Gastrocnemius medialis (tissue), 4 donors: ENCODE measurements at regions of chr18 and their contacts with region 1.

Region 1: GRCh38 chr18:2932247-2933181 is 80.4 kb downstream of the LPIN2 start:
- DNase-seq: no peak
- ATAC-seq: peak; percentile 26 to 64
- H3K4me3 ChIP-seq: no peak overlapping the region
- H3K27ac ChIP-seq: no peak overlapping the region
- H3K4me1 ChIP-seq: no peaks in the 10 kb centered on the region
- H3K27me3 ChIP-seq: no peaks in the 10 kb centered on the region
- CTCF ChIP-seq: peak; percentile 54 to 89 (median 80)
- POLR2A ChIP-seq: no peak

Region 2: DNA sequence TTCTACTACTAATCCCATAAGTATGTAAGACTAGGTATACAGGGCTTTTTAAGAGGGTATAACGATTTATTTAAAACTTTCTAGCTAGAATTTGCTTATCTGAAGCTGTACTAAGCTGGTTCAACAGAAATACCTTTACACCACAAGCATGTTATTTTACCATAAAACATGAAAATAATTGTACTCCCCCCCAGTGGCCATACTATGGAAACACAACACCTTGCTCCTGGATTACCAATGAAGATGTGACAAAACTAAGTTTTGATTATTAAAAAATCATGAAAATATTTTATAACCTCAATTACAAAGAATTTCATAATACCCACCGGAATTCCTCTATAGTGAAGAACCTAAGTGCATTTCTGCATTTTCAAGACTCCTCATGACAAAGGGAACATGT is 53.1 kb after region 1 on chr18:
- in situ Hi-C with region 1: no loop called
- intact Hi-C with region 1: loop called (anchors 1 kb)
- DNase-seq: no peak
- ATAC-seq: no peak
- H3K4me3 ChIP-seq: no peak overlapping the region
- H3K27ac ChIP-seq: no peak overlapping the region
- H3K4me1 ChIP-seq: peaks cover 14 to 26% of the 10 kb centered on the region in 2 donors
- H3K27me3 ChIP-seq: no peaks in the 10 kb centered on the region
- CTCF ChIP-seq: peak in 3 of 5 experiments; percentile 25 to 44 (median 37)
- POLR2A ChIP-seq: no peak

Region 3: DNA sequence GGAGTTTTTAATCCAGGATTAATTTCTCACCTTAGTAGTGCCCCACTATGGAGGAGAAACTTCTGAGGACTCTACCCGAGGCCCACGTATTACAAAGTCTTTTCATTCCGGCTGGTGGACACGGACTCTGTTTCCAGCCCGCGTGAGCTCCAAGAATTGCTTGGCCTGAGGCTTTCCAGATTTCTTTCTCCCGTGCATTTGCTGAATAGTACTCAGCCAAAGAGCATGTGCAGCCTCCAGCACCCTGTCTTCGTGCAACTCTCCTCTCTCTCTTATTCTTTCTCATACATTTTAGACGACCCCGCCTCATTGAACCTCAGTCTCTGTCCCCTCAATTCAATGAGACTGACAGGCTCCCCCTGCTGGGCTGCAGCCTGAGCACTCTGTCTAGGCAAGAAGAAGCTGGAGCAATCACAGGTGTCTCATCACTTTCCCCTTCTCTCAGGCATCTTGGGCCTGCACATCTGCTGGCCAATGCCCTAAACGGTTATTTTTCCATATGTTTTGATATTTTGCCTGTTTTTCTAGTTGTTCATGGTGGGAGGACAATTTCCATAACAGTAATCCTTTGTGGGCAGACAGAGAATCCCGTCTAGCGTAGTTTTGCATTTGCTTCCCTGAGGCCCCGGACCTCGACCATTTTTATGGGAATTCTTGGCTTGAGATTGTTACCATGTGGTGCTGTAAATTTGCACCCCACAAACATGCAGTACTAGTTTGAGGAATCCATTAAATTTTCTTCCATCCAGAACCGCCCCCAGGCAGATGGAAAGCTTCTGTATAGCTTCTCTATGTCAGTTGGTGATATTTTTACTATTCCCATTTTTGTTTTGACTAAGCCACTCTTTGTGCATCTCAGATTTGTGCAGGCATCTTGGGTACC is 130.5 kb after region 1 on chr18:
- in situ Hi-C with region 1: loop called in 3 of 4 experiments (anchors 5 kb)
- intact Hi-C with region 1: loop called (anchors 1 kb)
- DNase-seq: peak; percentile 36 to 54
- ATAC-seq: peak; percentile 69 to 72
- H3K4me3 ChIP-seq: no peak overlapping the region
- H3K27ac ChIP-seq: peak overlapping the region in 1 of 4 donors; percentile 71
- H3K4me1 ChIP-seq: peaks cover 3 to 5% of the 10 kb centered on the region in 2 donors
- H3K27me3 ChIP-seq: no peaks in the 10 kb centered on the region
- CTCF ChIP-seq: peak; percentile 54 to 84 (median 63)
- POLR2A ChIP-seq: no peak

Region 4: DNA sequence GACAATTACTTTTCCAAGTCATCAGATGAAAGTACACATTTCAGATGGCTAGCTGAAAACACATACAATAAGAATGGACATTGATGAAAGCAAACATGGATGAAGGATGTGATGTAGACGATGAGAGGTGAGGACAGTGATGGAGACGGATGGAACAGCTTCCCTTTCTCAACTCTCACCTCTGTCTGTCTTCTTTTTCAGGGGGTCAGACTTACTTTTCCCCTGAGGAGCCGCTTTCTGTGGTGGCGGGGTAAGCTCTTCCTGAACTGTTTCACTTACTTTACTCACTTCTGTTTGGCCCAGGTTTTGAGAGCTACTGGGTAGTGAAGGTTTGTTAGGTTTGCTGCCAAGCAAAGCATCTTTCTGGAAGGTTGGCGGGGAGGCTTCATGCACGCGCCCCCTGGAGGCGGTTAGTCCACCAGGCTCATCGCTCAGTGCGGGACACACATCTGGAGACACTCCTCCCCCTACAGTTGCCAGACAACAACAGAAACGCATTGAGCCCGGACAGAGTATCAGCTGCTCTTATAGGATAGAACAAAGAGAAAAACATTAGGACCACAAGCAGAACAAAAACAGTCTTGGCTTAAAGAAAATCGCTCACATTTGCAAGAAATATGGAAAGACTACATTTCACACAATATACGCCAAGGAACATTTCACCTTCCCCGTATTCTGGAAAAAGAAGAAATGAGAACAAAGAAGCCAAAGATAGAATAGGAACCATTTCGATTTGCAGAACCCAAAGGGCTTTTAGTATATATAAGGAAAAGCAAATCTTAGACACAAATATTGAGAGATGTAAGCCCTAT is 196.7 kb after region 1 on chr18:
- in situ Hi-C with region 1: loop called in 2 of 4 experiments (anchors 25 kb)
- intact Hi-C with region 1: loop called (anchors 1 kb)
- DNase-seq: peak; percentile 38 to 68
- ATAC-seq: peak; percentile 41 to 58
- H3K4me3 ChIP-seq: no peak overlapping the region
- H3K27ac ChIP-seq: peak overlapping the region in 3 of 4 donors; percentile 9 to 69 (median 31)
- H3K4me1 ChIP-seq: peaks cover 9 to 14% of the 10 kb centered on the region in 2 donors
- H3K27me3 ChIP-seq: no peaks in the 10 kb centered on the region
- CTCF ChIP-seq: peak in 4 of 5 experiments; percentile 34 to 71 (median 62)
- POLR2A ChIP-seq: no peak

Region 5: DNA sequence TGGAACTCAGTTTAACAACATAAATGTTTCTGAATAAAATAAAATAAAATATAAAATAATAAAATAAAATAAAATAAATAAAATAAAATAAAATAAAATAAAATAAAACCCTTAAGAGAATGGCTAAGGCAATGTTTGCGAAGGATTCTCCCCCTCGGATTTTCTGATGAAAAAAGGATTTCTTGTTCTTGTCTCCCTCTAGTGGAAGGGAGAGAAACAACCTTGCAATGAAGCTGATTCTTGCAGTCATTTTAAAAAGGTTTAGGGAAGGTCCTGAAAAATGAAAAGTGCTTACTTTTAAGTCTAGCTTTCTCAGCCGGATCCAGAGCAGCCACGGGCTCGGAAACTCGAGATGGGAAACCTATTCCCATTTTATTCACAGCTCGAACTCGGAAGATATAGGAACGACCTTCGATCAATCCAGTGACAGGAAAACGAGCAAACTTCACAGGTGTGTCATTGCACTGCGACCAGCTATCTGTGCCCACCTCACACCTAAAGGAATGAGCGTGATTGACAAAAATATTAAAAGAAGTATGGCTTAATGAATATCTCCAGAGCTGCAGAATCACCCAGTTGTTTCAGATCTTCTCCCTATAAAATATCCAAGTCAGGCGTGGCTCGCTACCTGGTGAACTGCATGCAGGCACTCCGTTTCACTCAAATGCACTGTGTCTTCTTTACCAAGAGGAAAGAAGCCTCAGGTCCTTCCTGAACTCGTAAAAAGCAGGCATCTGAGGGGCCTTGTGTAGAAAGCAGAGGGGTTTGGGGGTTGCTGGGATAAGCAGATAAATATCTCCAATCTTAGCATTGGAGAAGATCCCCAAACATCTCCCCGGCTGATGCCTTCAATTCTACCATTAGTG is 219.1 kb after region 1 on chr18:
- in situ Hi-C with region 1: loop called in 3 of 4 experiments (anchors 10 to 25 kb)
- intact Hi-C with region 1: no loop called
- DNase-seq: no peak
- ATAC-seq: no peak
- H3K4me3 ChIP-seq: no peak overlapping the region
- H3K27ac ChIP-seq: peak overlapping the region in 3 of 4 donors; percentile 10 to 49 (median 33)
- H3K4me1 ChIP-seq: peaks cover 12 to 18% of the 10 kb centered on the region in 2 donors
- H3K27me3 ChIP-seq: no peaks in the 10 kb centered on the region
- CTCF ChIP-seq: peak; percentile 45 to 84 (median 61)
- POLR2A ChIP-seq: no peak